ENCODE measurements at regions of chr6 and their contacts with region 1.

Region 1: DNA sequence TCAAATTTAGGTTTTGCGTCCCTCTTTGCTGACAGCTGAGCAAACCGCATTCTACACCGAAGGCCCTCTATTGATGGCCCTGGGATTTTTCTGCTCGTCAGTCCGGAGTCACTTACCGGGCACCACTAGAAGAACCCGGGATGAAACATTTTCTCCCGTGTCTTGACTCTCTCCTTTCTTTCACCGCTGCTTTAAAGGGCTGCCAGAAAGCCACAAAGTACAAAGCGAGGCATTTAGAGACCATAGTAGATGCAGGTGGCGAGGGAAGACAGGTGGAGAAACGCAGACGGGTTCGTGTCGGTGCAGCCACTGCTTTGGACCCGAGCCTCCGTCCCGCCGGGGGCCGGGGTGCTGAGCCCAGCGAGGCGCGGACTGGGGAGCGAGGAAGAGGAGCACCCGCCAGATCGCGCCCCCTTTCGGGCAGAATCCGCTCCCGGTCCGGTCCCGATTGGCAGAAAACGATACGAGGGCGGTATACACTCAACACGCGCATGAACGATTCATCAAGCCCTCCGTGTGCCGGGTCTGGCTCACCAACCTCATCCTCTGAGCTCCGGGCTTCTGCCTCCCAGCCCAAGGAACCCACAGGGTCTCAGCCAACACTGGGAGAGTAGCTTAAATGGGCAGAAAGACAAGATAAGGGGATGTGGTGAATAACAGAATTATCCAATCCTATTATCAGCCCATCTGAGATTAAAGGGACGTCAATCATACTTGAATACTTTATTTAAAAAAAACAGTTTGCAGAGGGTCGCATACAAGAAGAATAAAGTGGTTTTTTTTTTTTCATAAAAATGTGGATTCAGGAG is 84.9 kb downstream of the TRIM27 start:
- DNase-seq: peak; percentile 54 to 90 (median 82)
- ATAC-seq: peak; percentile 68
- H3K4me3 ChIP-seq: peak overlapping the region; percentile 74 to 75
- H3K4me3 Mint-ChIP-seq: peak overlapping the region; percentile 92
- H3K27ac ChIP-seq: peak overlapping the region; percentile 44 to 58
- H3K27ac Mint-ChIP-seq: peak overlapping the region; percentile 89
- H3K4me1 ChIP-seq: peaks cover 14% of the 10 kb centered on the region
- H3K4me1 Mint-ChIP-seq: peaks cover 14% of the 10 kb centered on the region
- H3K27me3 ChIP-seq: peaks cover 0 to 7% of the 10 kb centered on the region in 2 experiments
- H3K27me3 Mint-ChIP-seq: peaks cover 18% of the 10 kb centered on the region
- CTCF ChIP-seq: peak; percentile 63

Region 2: DNA sequence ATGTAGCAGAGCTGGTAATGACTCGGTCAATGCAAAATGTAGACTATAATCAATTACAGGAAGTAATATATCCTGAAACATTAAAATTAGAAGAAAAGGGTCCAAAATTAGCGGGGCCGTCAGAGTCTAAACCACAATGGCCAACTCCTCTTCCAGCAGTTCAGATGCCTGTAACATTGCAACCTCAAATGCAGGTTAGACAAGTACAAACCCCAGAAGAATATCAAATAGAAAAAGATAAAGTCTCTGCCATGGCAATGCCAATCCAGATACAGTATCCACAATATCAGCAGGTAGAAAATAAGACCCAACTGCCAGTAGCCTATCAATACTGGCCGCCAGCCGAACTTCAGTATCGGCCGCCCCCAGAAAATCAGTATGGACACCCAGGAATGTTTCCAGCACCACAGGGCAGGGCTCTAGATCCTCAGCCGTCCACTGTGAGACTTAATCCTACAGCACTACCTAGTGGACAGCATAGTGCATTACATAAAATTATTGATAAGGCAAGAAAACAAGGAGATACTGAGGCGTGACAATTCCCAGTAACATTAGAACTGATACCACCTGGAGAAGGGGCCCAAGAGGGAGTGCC is 154.8 kb before region 1 on chr6:
- CTCF ChIA-PET with region 1: interaction called, 3 read pairs
- POLR2A ChIA-PET with region 1: no interaction called
- intact Hi-C with region 1: loop called (anchors 1 to 2 kb)
- DNase-seq: peak in 3 of 9 experiments; percentile 2 to 60 (median 43)
- ATAC-seq: peak; percentile 80
- H3K4me3 ChIP-seq: no peak overlapping the region
- H3K4me3 Mint-ChIP-seq: no peak overlapping the region
- H3K27ac ChIP-seq: no peak overlapping the region
- H3K27ac Mint-ChIP-seq: no peak overlapping the region
- H3K4me1 ChIP-seq: no peaks in the 10 kb centered on the region
- H3K4me1 Mint-ChIP-seq: peaks cover 8% of the 10 kb centered on the region
- H3K27me3 ChIP-seq: peaks cover 7 to 14% of the 10 kb centered on the region in 2 experiments
- H3K27me3 Mint-ChIP-seq: peaks cover 80% of the 10 kb centered on the region
- CTCF ChIP-seq: peak; percentile 62

Region 3: DNA sequence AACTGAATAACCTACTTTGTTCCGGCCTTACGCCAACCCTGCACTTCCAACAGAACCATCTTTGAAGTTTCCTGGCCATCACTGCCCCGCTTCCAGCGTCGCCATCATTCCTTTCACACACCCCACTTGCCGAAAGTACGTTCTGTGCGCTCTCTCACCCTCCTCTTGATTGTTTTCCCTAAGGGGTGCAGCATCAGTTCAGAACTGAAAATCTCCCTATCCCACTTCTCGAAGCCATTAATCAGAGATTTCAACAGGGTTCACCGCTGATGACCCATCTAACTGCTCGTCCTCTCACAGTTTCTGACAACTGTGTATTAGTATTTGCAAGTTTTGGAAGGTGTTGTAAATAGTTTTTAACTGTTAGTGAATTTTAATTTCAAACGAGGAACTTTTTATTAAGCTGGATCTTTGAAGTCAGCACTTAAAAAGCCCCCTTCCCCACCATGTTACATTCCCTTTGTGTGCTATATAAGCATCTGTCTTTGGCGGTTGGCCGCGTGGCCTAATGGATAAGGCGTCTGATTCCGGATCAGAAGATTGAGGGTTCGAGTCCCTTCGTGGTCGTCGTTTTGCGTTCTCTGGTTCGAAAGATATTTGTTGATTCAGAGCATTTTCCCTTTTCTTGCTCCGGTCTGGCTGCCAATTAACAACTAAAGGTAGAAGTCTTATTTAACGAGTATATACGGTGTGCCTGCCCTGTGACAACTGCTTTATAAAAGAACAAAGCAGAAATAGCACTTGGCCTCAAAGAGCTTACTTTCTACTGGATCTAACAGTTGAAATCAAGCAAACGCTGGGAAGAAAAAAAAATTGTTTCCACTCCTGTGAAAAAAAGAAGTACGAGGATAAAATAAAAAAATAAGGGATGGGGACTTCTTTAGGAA is 42.3 kb after region 1 on chr6:
- CTCF ChIA-PET with region 1: interaction called, 14 read pairs
- POLR2A ChIA-PET with region 1: no interaction called
- intact Hi-C with region 1: loop called (anchors 1 kb)
- DNase-seq: peak; percentile 14 to 81 (median 53)
- ATAC-seq: no peak
- H3K4me3 ChIP-seq: peak overlapping the region; percentile 37 to 45
- H3K4me3 Mint-ChIP-seq: peak overlapping the region; percentile 86
- H3K27ac ChIP-seq: no peak overlapping the region
- H3K27ac Mint-ChIP-seq: peak overlapping the region; percentile 89
- H3K4me1 ChIP-seq: peaks cover 29% of the 10 kb centered on the region
- H3K4me1 Mint-ChIP-seq: peaks cover 52% of the 10 kb centered on the region
- H3K27me3 ChIP-seq: peaks cover 0 to 3% of the 10 kb centered on the region in 2 experiments
- H3K27me3 Mint-ChIP-seq: peaks cover 4% of the 10 kb centered on the region
- CTCF ChIP-seq: no peak

Region 4: DNA sequence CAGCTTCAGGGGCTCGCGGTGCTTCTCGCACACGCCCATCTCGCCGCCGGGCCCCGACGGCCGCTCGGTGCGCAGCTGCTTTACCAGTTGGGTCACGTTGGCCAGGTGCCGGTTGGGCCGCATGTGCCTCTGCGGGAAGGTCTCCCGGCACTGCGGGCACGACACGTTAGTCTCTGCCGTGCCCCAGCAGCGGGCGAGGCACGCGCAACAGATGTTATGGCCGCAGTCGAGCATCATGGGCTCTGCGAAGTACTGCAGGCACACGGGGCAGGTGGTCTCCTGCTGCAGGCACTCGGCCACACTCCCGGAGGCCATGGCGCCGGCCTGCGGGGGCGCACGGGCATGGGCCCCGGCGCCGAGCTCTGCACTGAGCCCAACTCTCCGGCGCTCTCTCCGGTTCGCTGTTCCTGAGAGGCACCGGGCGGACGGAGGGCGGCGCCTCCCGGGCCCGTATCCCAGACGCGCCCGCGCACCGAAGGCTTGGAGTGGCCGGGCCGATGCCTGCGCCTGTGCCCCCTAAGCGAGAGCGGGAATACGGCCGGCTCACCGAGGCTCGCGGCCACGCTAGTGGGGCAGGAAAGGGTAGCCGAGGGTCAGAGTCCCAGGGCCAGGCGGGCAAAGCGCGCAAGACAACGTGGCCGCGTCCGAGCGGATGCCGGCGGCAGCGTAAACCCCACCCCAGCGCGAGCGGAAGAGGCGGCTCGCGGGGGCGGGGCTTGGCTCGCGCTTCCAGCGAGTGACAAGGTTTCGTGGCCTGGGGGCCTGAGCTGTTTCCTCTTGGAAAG is 84.7 kb after region 1 on chr6 and contains the start of gene TRIM27:
- CTCF ChIA-PET with region 1: interaction called, 9 read pairs
- POLR2A ChIA-PET with region 1: interaction called, 4 read pairs
- intact Hi-C with region 1: loop called in 1 of 2 experiments (anchors 1 kb)
- DNase-seq: peak; percentile 51 to 90 (median 77)
- ATAC-seq: peak; percentile 81
- H3K4me3 ChIP-seq: peak within 1 kb of the TSS; percentile 84 to 97
- H3K4me3 Mint-ChIP-seq: peak within 1 kb of the TSS; percentile 88
- H3K27ac ChIP-seq: peak within 1 kb of the TSS; percentile 73 to 87
- H3K27ac Mint-ChIP-seq: peak within 1 kb of the TSS; percentile 94
- H3K4me1 ChIP-seq: peaks cover 33% of the 10 kb centered on the region
- H3K4me1 Mint-ChIP-seq: peaks cover 42% of the 10 kb centered on the region
- H3K27me3 ChIP-seq: no peaks in the 10 kb centered on the region
- H3K27me3 Mint-ChIP-seq: no peaks in the 10 kb centered on the region
- CTCF ChIP-seq: no peak
- total RNA-seq, gene TRIM27: 7.8 to 9.4 TPM

Region 5: DNA sequence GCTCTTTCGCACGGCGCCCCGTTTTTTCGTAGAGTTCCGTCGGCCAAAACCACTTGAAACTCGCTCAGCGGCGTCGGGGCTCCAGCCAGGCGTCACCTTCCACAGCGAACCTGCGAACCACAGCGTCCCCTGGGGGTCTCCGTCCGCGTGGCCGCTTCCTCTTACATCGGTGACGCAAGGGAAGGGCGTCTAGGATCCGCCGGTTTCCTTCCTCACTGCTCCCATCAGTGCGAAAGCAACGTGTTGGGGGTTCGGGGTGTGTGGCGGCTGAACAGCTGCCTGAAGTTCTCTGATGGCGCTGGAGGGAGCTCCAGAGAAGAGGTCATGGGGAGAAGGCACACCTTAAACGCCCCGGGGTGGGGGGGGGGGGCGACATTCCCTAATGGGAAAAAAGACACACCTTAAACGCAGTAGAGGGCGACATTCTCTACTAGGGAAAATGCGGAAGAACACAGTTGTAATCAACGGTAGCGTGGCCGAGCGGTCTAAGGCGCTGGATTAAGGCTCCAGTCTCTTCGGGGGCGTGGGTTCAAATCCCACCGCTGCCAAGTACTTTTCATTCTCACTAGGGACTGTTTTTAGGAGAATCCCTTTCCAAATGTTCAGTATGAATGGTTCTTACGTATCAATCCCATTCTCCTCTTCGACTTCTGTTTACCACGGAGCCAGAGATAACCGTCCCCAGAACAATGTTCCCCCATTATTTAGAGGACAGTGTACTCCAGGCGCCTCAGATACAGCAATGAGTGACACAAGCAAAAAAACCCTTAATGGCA is 149.9 kb after region 1 on chr6:
- CTCF ChIA-PET with region 1: interaction called, 44 read pairs
- POLR2A ChIA-PET with region 1: interaction called, 3 read pairs
- intact Hi-C with region 1: loop called (anchors 1 to 2 kb)
- DNase-seq: peak; percentile 54 to 87 (median 77)
- ATAC-seq: peak; percentile 90
- H3K4me3 ChIP-seq: peak overlapping the region; percentile 18 to 47
- H3K4me3 Mint-ChIP-seq: peak overlapping the region; percentile 77
- H3K27ac ChIP-seq: no peak overlapping the region
- H3K27ac Mint-ChIP-seq: no peak overlapping the region
- H3K4me1 ChIP-seq: peaks cover 12% of the 10 kb centered on the region
- H3K4me1 Mint-ChIP-seq: peaks cover 29% of the 10 kb centered on the region
- H3K27me3 ChIP-seq: no peaks in the 10 kb centered on the region
- H3K27me3 Mint-ChIP-seq: peaks cover 27% of the 10 kb centered on the region
- CTCF ChIP-seq: peak; percentile 64

Region 6: GRCh38 chr6:29016559-29017427 is 178.0 kb after region 1 on chr6:
- CTCF ChIA-PET with region 1: interaction called, 140 read pairs
- POLR2A ChIA-PET with region 1: interaction called, 17 read pairs
- intact Hi-C with region 1: loop called (anchors 1 kb)
- DNase-seq: peak; percentile 66 to 90 (median 86)
- ATAC-seq: peak; percentile 78
- H3K4me3 ChIP-seq: peak overlapping the region; percentile 52 to 62
- H3K4me3 Mint-ChIP-seq: peak overlapping the region; percentile 92
- H3K27ac ChIP-seq: no peak overlapping the region
- H3K27ac Mint-ChIP-seq: peak overlapping the region; percentile 87
- H3K4me1 ChIP-seq: peaks cover 5% of the 10 kb centered on the region
- H3K4me1 Mint-ChIP-seq: peaks cover 19% of the 10 kb centered on the region
- H3K27me3 ChIP-seq: peaks cover 0 to 11% of the 10 kb centered on the region in 2 experiments
- H3K27me3 Mint-ChIP-seq: peaks cover 21% of the 10 kb centered on the region
- CTCF ChIP-seq: peak; percentile 79

Measured in CD8-positive, alpha-beta T cell (primary cell).